ENCODE measurements at regions of chr9 and their contacts with region 1.

Region 1: DNA sequence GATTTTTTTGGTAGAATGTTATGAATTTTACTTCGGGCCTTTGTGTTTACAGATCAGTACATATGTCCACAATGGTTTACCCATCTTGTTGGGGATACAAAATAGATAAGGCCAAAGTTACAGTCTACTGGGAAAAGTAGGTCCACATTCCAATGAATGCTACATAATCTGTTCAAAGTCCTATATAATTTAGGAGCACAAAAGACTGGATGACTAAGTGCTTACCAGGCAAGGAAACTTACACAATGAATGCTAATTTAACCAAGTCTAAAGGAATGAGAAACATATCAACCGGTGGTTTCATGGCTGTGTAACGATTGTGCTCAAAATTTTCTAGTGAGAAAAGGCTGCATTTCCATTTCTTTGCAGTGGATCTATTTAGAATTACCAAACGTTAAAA is 97.4 kb upstream of the TRPM3 start:
- DNase-seq: no peak
- ATAC-seq: no peak
- H3K4me3 Mint-ChIP-seq: no peak overlapping the region
- H3K27ac Mint-ChIP-seq: no peak overlapping the region
- H3K4me1 Mint-ChIP-seq: no peaks in the 10 kb centered on the region
- H3K27me3 Mint-ChIP-seq: peaks cover 3% of the 10 kb centered on the region

Region 2: DNA sequence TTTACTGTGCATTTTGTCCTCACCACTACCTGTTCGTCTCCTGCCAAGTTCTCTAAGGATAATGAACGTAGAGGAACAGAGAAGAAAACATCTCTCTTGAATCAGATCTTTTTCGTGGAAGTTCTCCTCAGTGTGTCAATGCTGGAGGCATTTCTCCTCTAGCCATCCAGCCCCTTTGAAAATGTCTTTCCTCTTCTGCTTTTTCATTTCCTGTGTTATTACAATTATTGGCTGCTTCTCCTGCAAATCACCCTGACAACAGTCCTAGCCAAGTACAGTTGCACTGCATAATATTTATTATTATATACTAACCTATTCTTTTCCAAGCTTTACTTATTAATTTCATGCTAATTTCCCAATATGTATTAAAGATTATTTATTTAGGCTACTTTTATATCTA is 35.5 kb before region 1 on chr9:
- CTCF ChIA-PET with region 1: no interaction called
- POLR2A ChIA-PET with region 1: no interaction called
- intact Hi-C with region 1: loop called in 1 of 2 experiments (anchors 5 kb)
- DNase-seq: no peak
- ATAC-seq: no peak
- H3K4me3 Mint-ChIP-seq: no peak overlapping the region
- H3K27ac Mint-ChIP-seq: no peak overlapping the region
- H3K4me1 Mint-ChIP-seq: no peaks in the 10 kb centered on the region
- H3K27me3 Mint-ChIP-seq: no peaks in the 10 kb centered on the region